Breast epithelium (tissue), 4 donors: ENCODE measurements at regions of chr21 and their contacts with region 1.

Region 1: DNA sequence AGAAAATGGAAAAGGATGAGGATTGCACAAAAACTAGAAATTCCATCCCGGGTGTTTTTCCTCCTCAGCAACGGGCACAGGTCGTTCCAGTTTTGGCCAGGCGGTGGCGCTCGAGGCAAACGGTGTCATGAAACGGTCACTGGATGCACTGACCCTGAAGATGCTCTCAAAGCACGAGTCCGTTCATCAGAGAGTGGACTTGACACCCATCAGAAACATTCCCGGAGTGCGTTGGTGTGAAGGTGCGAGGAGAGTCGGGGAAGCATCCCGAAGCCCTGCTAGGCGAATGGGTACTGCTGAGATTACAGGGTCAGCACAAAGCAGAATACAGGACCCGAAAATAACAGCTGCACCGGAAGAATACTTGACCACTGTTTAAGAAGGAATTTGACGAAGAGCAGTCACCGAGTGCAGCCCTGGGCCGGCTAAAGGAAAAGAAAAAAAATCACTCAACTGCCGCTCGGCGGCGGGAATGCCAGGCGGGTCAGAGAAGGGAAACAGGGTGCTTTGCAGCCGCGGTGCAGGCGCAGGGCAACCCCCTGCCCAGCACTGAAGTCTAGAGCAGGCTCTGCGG is 71.7 kb upstream of the ETS2 start:
- DNase-seq: peak; percentile 78 to 88
- H3K4me3 ChIP-seq: peak overlapping the region; percentile 5 to 14 (median 11)
- H3K27ac ChIP-seq: no peak overlapping the region
- H3K4me1 ChIP-seq: no peaks in the 10 kb centered on the region
- H3K27me3 ChIP-seq: peaks cover 0 to 6% of the 10 kb centered on the region in 2 donors
- CTCF ChIP-seq: peak; percentile 86 to 91 (median 90)
- POLR2A ChIP-seq: no peak

Region 2: DNA sequence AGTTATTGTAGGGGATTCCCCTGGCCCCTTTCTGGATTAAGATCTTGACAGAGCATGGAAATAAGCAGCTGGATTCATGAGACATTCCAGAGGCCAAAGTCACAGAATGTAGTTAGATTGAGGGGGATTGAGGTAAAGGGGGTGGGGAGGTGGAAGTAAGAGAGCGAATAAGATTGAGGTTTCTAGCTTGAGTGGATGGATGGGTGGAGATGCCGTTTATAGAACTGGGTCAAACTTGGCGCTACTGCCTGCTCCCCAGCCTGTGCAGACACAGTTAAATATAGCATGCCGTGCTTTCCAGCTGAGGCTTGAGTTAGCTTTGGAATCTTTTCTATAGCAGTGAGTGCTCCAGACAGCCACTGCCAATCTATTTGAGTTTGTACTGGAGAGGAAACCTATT is 1281.8 kb before region 1 on chr21:
- intact Hi-C with region 1: no loop called
- DNase-seq: no peak
- H3K4me3 ChIP-seq: no peak overlapping the region
- H3K27ac ChIP-seq: peak overlapping the region in 1 of 2 donors; percentile 30
- H3K4me1 ChIP-seq: peaks cover 0 to 6% of the 10 kb centered on the region in 2 donors
- H3K27me3 ChIP-seq: no peaks in the 10 kb centered on the region
- CTCF ChIP-seq: no peak
- POLR2A ChIP-seq: no peak

Region 3: DNA sequence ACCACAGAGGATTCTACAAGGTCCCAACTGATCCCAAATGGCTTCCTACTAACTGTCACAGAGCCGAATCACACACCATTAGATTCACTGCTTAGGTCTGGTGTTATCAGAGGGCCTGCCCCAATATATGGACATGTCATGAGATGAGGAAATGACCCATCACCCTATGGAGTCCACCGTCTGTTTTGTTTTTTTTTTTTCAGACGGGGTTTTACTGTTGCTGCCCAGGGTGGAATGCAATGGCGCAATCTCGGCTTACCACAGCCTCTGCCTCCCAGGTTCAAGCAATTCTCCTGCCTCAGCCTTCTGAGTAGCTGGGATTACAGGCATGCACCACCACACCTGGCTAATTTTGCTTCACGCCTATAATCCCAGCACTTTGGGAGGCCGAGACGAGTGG is 12.1 kb before region 1 on chr21:
- intact Hi-C with region 1: no loop called
- DNase-seq: no peak
- H3K4me3 ChIP-seq: no peak overlapping the region
- H3K27ac ChIP-seq: no peak overlapping the region
- H3K4me1 ChIP-seq: no peaks in the 10 kb centered on the region
- H3K27me3 ChIP-seq: no peaks in the 10 kb centered on the region
- CTCF ChIP-seq: no peak
- POLR2A ChIP-seq: no peak

Region 4: DNA sequence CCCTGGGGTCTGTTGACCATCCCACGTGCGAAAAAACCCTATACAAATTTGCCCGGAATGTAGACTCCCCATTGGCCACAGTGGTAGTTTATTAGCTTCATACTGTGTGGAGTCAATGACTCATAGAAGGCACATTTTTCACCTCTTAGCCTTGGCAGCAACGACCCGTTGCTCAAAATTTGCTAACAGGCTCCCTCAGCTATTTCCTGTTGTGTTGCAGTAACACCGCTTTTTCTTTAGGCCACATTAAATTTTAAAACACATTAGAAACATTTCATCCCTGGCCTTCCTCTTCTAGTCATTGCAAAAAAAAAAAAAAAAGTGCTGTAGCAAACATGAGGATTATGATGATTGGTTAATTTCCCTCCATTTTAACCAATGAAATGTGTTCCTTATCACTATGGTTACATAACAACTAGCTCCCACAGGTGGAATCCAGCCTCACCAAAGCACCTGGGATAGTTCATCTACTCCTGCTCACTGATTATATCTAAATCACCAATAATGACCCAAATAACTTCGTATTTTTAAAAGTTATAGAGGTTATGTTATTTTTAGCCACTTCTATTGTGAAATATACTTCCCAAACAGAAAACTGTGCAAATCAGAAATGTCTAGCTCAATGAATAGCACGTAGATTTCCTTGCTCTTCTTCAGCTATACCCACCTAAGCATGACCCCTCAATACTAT is 21.8 kb after region 1 on chr21:
- intact Hi-C with region 1: no loop called
- DNase-seq: peak in 1 of 2 donors; percentile 65
- H3K4me3 ChIP-seq: no peak overlapping the region
- H3K27ac ChIP-seq: peak overlapping the region; percentile 68 to 85
- H3K4me1 ChIP-seq: no peaks in the 10 kb centered on the region
- H3K27me3 ChIP-seq: no peaks in the 10 kb centered on the region
- CTCF ChIP-seq: no peak
- POLR2A ChIP-seq: no peak

Region 5: GRCh38 chr21:39125752-39126485 is 391.9 kb after region 1 on chr21:
- intact Hi-C with region 1: loop called (anchors 10 kb)
- DNase-seq: peak in 1 of 2 donors; percentile 45
- H3K4me3 ChIP-seq: no peak overlapping the region
- H3K27ac ChIP-seq: peak overlapping the region; percentile 4 to 25
- H3K4me1 ChIP-seq: no peaks in the 10 kb centered on the region
- H3K27me3 ChIP-seq: no peaks in the 10 kb centered on the region
- CTCF ChIP-seq: peak; percentile 17 to 60 (median 50)
- POLR2A ChIP-seq: no peak